ENCODE measurements at regions of chr1 and their contacts with region 1.

Region 1: GRCh38 chr1:219744652-219745469 is 132.0 kb upstream of the ZC3H11B start:
- DNase-seq: no peak
- ATAC-seq: peak in 2 of 8 donors; percentile 30 to 38
- H3K4me3 ChIP-seq: no peak overlapping the region
- H3K27ac ChIP-seq: no peak overlapping the region
- H3K4me1 ChIP-seq: peaks cover 0 to 28% (median 4%) of the 10 kb centered on the region in 9 donors
- H3K27me3 ChIP-seq: no peaks in the 10 kb centered on the region
- CTCF ChIP-seq: no peak

Region 2: DNA sequence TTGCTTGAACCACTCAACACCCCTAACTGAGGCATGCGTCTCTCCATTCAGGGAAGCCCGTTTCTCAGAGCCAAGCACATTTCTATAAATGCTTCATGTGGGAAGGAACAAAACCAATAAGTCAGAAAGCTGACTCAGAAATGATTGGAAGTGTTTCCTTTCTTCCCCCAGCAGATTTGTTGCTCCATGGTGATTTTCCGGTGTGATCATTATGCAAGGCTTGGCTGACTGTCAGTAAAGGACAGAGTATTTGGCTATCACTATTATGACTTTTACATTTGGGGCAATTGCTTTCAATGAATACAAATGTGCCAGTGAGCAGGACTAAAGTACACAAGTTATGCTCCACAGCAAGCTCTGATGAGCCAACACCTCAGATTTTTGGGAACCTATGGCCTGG is 78.6 kb before region 1 on chr1:
- intact Hi-C with region 1: loop called in 4 of 10 experiments (anchors 5 to 10 kb)
- DNase-seq: no peak
- ATAC-seq: peak in 1 of 8 donors; percentile 74
- H3K4me3 ChIP-seq: no peak overlapping the region
- H3K27ac ChIP-seq: peak overlapping the region in 2 of 10 donors; percentile 29 to 40
- H3K4me1 ChIP-seq: peaks cover 7 to 33% (median 24%) of the 10 kb centered on the region in 9 donors
- H3K27me3 ChIP-seq: no peaks in the 10 kb centered on the region
- CTCF ChIP-seq: no peak

Region 3: DNA sequence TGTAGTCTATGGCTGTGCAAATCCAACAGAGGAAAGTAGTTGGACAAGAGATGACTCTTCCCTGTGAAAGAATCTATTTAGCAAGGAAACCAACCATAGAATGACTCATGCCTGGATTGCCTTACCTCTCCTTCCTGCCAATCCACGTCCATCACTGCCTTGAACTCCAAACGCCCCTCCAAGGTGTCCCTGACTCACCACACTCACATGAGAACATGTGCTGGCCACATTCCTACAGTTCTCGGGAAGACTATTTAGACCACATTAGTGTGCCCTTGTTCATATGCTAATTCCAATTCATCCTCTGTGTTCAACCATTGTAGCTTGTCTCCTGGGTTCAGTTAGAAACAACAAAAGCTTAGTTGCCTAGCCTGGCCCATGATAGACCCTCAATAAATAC is 26.2 kb after region 1 on chr1:
- intact Hi-C with region 1: no loop called
- DNase-seq: no peak
- ATAC-seq: peak in 3 of 8 donors; percentile 28 to 59 (median 57)
- H3K4me3 ChIP-seq: no peak overlapping the region
- H3K27ac ChIP-seq: no peak overlapping the region
- H3K4me1 ChIP-seq: peaks cover 0 to 13% (median 2%) of the 10 kb centered on the region in 9 donors
- H3K27me3 ChIP-seq: no peaks in the 10 kb centered on the region
- CTCF ChIP-seq: no peak

Region 4: GRCh38 chr1:219792337-219793021 is 47.6 kb after region 1 on chr1:
- intact Hi-C with region 1: loop called in 1 of 10 experiments (anchors 1 kb)
- DNase-seq: peak in 1 of 2 donors; percentile 22
- ATAC-seq: peak in 7 of 8 donors; percentile 57 to 82 (median 72)
- H3K4me3 ChIP-seq: no peak overlapping the region
- H3K27ac ChIP-seq: peak overlapping the region in 2 of 10 donors; percentile 4 to 45
- H3K4me1 ChIP-seq: peaks cover 0 to 21% (median 11%) of the 10 kb centered on the region in 9 donors
- H3K27me3 ChIP-seq: no peaks in the 10 kb centered on the region
- CTCF ChIP-seq: no peak